Right cardiac atrium (tissue), 5 donors: ENCODE measurements at regions of chr4 and their contacts with region 1.

Region 1: DNA sequence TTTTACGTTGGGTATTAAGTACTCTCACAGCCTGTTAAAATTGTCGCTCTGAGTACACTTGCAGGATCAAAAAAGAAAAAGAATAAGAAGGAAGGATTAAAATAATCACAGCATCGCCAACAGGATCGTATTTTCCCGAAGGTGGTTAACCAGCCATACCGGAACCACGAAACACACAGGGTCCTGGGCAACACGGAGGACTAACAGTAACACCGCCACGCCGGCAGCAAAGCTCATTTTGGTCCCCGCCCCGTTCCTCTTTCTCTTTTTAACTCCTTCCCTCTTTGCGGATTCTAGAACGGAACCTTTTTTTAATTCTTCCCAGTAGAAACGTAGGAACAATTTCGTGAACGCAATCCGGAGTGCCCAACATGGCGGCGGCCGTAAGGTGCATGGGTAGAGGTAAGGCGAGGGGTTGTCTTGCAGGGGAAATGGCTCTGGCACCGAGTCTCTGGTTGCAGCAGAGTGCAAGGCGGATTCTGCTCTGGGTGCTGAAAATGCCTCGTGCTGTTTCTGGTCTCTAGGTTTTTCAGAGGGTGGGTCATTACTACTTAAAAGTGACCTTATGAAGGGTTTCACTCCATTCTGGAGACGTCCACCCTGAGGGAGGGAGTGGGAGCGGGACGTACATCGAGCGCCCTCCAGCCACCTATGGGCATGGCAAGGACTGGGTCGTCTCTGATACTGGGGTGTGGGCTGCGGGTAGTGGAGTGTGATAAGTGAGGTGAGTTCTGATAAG is at the start of gene MRPL1:
- DNase-seq: peak; percentile 87 to 94 (median 92)
- ATAC-seq: peak; percentile 96 to 97
- H3K4me3 ChIP-seq: peak within 1 kb of the TSS; percentile 97
- H3K27ac ChIP-seq: peak within 1 kb of the TSS; percentile 100
- H3K4me1 ChIP-seq: peaks cover 2% of the 10 kb centered on the region
- H3K27me3 ChIP-seq: no peaks in the 10 kb centered on the region
- total RNA-seq, gene MRPL1: 34.1 to 39.5 (median 38.3) TPM

Region 2: DNA sequence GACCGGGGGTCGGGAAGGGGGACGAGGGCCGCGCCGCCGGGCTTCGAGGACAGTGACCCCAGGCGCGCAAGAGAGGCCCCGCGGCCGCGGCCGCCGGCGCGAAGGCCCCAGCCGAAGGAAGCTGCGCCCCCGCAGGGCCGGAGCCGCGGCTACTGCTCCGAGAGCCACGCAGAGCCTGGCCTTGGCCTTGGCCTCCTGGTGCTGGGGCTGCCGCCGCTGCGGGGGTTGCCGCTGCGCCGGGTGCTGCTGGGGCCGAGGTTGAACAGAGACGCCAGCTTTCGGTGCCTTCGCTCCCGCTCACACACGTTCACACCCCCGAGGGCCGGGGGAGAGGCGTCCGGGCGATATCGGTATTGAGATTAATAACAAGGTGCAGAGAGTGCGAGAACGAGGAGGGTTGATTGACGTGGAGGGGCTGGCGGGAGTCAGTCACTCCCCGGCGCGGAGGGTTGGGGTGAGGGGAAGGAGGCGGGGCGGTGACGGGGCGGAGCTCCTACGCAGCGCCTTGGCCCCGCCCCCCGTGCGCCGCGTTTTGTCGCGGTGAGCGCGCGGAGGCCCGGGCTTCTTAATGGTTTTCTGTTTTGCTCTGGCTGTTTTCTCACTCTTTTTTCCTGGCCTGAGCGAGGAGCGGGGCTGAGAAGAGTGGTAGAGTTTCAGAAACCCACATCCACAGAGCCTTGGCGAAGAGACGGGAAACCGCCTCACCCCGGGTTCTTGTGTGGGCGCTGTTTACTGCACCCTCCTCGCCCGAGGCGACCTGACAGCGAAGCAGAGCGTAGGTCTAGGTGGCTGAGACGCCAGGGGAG is 42.6 kb before region 1 on chr4:
- intact Hi-C with region 1: loop called in 1 of 4 experiments (anchors 5 kb)
- DNase-seq: peak; percentile 92 to 96 (median 96)
- ATAC-seq: peak; percentile 95 to 96
- H3K4me3 ChIP-seq: peak overlapping the region; percentile 93
- H3K27ac ChIP-seq: peak overlapping the region; percentile 99
- H3K4me1 ChIP-seq: no peaks in the 10 kb centered on the region
- H3K27me3 ChIP-seq: no peaks in the 10 kb centered on the region